Heart left ventricle (tissue), 16 donors: ENCODE measurements at regions of chr16 and their contacts with region 1.

Region 1: DNA sequence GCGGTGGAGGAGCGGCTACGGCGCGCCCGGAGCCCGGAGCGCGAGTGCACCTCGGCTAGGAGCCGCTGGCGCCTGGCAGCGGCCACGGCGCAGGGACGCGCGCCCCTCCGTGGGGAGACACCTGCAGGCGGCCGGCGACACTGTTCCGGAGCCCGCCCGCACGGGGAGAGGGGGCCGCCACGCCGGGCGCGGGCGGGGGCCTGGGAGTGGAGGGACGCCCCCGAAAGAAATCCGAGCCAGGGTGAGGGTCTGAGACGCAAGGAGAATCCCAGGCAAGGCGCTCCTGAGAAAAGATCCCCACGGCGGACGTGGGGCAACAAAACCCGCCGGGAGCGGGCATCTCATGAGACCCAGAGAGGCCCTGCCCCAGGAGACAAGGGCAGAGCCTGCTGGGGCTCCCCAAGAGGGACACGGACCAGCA is at the start of gene GSG1L:
- DNase-seq: no peak
- ATAC-seq: peak in 3 of 4 donors; percentile 55 to 70 (median 69)
- H3K4me3 ChIP-seq: peak within 1 kb of the TSS in 11 of 12 donors; percentile 4 to 50 (median 36)
- H3K27ac ChIP-seq: no peak within 1 kb of the TSS
- H3K4me1 ChIP-seq: peaks cover 0 to 14% (median 1%) of the 10 kb centered on the region in 12 donors
- H3K27me3 ChIP-seq: peaks cover 5 to 57% (median 29%) of the 10 kb centered on the region in 9 donors
- CTCF ChIP-seq: peak in 8 of 12 donors; percentile 9 to 45 (median 22)
- POLR2A ChIP-seq: no peak
- total RNA-seq, gene GSG1L: 0.66 to 8.7 (median 2.6) TPM in 6 of 9 donors, not detected in the others

Region 2: DNA sequence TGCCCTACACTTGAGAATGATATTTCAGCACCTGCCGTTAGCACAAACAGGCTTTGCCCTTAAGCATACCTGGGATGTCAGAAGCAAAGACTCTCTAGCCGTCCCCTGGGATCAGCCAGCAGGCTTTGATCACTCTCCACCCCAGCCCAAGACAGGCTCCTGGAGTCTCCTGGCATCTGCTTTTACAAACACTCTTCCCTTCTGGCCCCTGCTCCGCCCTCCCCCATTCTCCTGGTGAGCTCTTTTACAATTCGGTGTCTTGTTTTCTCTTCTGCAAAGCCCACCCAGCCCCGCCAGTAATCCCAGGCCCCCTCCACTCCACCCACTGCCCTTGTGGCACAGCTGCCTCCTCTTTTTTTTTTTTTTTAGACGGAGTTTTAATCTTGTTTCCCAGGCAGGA is 463.3 kb before region 1 on chr16:
- intact Hi-C with region 1: loop called in 1 of 10 experiments (anchors 10 kb)
- DNase-seq: no peak
- ATAC-seq: no peak
- H3K4me3 ChIP-seq: no peak overlapping the region
- H3K27ac ChIP-seq: no peak overlapping the region
- H3K4me1 ChIP-seq: peaks cover 0 to 5% (median 0%) of the 10 kb centered on the region in 12 donors
- H3K27me3 ChIP-seq: no peaks in the 10 kb centered on the region
- CTCF ChIP-seq: no peak
- POLR2A ChIP-seq: no peak

Region 3: GRCh38 chr16:27690608-27691007 is 373.0 kb before region 1 on chr16:
- intact Hi-C with region 1: loop called in 1 of 10 experiments (anchors 5 kb)
- DNase-seq: no peak
- ATAC-seq: no peak
- H3K4me3 ChIP-seq: no peak overlapping the region
- H3K27ac ChIP-seq: no peak overlapping the region
- H3K4me1 ChIP-seq: peaks cover 0 to 17% (median 0%) of the 10 kb centered on the region in 12 donors
- H3K27me3 ChIP-seq: no peaks in the 10 kb centered on the region
- CTCF ChIP-seq: peak in 11 of 12 donors; percentile 14 to 53 (median 38)
- POLR2A ChIP-seq: no peak

Region 4: GRCh38 chr16:27972500-27972899 is 91.2 kb before region 1 on chr16:
- intact Hi-C with region 1: loop called in 5 of 10 experiments (anchors 2 to 5 kb)
- DNase-seq: peak in 1 of 5 donors; percentile 37
- ATAC-seq: peak in 3 of 4 donors; percentile 51 to 69 (median 61)
- H3K4me3 ChIP-seq: no peak overlapping the region
- H3K27ac ChIP-seq: no peak overlapping the region
- H3K4me1 ChIP-seq: peaks cover 0 to 2% (median 0%) of the 10 kb centered on the region in 12 donors
- H3K27me3 ChIP-seq: no peaks in the 10 kb centered on the region
- CTCF ChIP-seq: peak in 11 of 12 donors; percentile 31 to 61 (median 50)
- POLR2A ChIP-seq: no peak

Region 5: DNA sequence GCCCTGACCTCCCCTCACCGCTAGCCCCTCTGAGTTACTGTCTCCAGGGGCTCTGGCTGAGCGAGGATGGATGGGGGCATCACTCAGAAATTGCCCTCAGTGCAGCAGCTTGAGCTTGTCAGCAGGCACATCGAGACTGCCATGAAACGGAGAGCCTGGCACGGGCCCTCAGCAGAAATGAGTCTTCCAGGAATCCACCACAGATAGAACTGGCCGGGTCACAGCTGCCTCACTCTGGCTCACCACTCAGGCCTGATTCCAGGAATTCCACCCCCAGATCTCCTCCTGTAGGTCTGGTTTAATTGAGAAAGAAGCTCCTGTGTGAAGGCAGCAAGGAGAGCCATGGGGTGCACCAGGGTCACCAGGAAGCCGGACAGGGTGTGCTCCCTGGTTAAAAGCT is 85.7 kb before region 1 on chr16:
- intact Hi-C with region 1: loop called in 4 of 10 experiments (anchors 2 to 5 kb)
- DNase-seq: peak in 4 of 5 donors; percentile 25 to 66 (median 50)
- ATAC-seq: peak; percentile 61 to 85 (median 80)
- H3K4me3 ChIP-seq: no peak overlapping the region
- H3K27ac ChIP-seq: peak overlapping the region in 2 of 12 donors; percentile 30 to 54
- H3K4me1 ChIP-seq: peaks cover 0 to 7% (median 0%) of the 10 kb centered on the region in 12 donors
- H3K27me3 ChIP-seq: no peaks in the 10 kb centered on the region
- CTCF ChIP-seq: no peak
- POLR2A ChIP-seq: no peak